Left ventricle myocardium superior (tissue), 1 donor: ENCODE measurements at regions of chr11 and their contacts with region 1.

Region 1: GRCh38 chr11:93652161-93652597 is 9.3 kb upstream of the CEP295 start:
- DNase-seq: no peak
- ATAC-seq: no peak

Region 2: GRCh38 chr11:93234602-93235207 is 417.5 kb before region 1 on chr11:
- intact Hi-C with region 1: loop called (anchors 5 kb)
- DNase-seq: peak; percentile 71
- ATAC-seq: peak; percentile 99

Region 3: DNA sequence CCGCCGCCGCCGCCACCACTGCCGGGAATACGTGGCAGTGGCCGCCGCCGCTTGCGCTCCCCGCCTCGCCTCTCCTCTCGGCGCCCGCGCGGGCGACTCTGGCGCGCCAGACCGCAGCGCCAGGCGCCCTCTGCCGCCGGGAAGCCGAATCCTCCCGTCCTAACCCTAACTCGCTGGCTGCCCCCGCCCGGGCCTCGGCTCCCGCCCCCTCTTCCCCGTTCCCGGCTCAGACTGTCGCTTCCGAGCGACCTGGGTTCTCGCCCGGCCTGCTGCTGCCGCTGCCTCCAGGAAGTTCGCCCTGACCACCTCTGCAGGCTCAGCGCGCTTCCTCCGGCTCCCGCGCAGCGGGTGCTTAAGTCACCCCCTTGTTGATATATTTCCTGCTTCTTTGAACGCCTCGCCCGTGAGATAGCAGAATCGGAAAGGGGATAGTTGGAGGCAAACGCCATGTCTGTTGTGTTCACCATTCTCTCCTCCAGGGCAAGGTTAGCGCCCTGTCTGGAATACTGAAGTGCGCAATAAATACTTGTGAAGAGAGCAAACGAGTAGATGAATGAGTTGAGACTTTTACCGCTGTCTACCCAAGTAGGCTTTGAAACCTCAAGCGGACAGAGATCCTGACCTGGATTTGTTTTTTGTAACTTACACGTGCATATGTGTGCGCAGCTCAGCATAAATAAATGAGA is 108.7 kb before region 1 on chr11 and contains the start of gene SMCO4:
- intact Hi-C with region 1: loop called (anchors 10 kb)
- DNase-seq: peak; percentile 93
- ATAC-seq: peak; percentile 92
- total RNA-seq, gene SMCO4: 50.7 TPM